ENCODE measurements at regions of chr4 and their contacts with region 1.

Region 1: DNA sequence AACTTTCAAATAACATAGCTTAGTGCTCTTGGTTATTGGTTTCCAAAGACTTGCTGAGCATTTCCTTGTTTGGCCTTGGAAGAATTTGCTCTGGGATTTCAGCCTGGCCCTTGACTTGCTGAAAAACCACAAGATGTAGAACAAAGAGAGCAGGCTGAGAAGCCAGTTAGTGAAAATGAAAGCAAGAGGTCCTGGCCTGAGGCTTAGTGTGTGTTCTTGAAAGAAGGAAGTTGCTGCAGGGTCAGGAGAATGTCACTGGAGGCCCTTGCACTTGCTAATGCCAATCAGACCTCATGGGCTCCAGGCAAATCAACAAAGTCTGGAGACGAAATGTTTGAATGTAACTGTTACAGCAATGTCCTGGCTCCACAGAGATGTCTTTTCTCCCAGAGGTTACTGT is 79.4 kb downstream of the SYNPO2 start:
- DNase-seq: peak in 1 of 2 donors; percentile 81
- H3K4me3 ChIP-seq: peak overlapping the region in 1 of 2 donors; percentile 24
- H3K27ac ChIP-seq: peak overlapping the region; percentile 76 to 84
- H3K4me1 ChIP-seq: peaks cover 17 to 61% of the 10 kb centered on the region in 2 donors
- H3K27me3 ChIP-seq: no peaks in the 10 kb centered on the region
- CTCF ChIP-seq: no peak

Region 2: DNA sequence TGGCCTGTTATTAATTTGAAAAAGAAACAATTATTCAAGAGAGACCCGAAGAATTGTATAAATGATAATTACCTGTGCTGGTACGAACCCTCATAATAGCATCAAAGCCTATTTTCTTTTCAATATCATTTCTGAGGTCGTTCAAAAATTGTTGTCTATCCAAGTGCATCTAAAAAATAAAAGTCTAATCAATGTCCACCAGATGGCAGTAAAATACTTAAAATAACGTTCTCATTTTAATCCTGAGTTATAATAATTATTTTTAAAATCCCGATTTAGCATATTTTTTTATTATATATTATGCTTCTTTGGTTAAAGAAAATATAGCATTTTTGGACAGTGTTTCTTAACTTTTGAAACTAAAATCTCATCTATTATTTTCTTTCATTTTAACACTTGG is 227.1 kb before region 1 on chr4:
- intact Hi-C with region 1: loop called (anchors 1 kb)
- DNase-seq: no peak
- H3K4me3 ChIP-seq: peak overlapping the region in 1 of 2 donors; percentile 36
- H3K27ac ChIP-seq: peak overlapping the region; percentile 29 to 50
- H3K4me1 ChIP-seq: peaks cover 0 to 9% of the 10 kb centered on the region in 2 donors
- H3K27me3 ChIP-seq: no peaks in the 10 kb centered on the region
- CTCF ChIP-seq: peak; percentile 45 to 54 (median 50)

Region 3: DNA sequence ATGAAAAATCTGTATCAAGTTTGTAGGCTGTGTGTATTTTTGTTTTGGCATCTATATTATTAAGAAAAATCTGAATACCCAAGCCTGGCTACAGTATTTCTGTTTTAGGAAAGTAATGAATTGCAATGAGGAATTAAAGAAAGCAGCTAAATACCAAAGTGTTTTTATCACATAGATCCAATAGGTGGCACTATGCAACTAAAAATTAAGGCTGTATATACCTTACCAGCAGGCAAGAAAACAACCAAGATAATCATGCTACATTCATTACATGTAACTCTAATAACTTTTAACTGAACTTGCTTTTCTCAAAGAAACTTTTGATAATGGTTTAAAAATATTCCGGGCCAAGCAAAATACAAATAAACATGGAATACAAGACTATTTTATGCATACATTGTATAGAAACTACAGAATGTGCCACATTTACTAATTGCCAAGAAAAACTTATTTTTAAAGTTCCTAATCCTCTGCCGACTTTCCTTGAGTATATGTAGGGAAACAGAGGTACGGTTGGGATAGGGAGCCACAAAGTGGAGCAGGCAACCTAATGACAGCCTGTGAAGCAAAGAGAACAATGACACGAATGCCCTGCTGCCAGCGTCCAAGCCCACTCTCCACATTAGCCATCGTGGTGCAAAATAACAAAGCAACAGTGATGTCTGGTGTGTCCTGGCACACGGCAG is 195.8 kb before region 1 on chr4:
- intact Hi-C with region 1: loop called (anchors 1 kb)
- DNase-seq: no peak
- H3K4me3 ChIP-seq: peak overlapping the region; percentile 27
- H3K27ac ChIP-seq: peak overlapping the region; percentile 62 to 76
- H3K4me1 ChIP-seq: peaks cover 7 to 46% of the 10 kb centered on the region in 2 donors
- H3K27me3 ChIP-seq: no peaks in the 10 kb centered on the region
- CTCF ChIP-seq: peak; percentile 46 to 62 (median 61)

Region 4: GRCh38 chr4:118835571-118836300 is 132.3 kb before region 1 on chr4 and contains the start of gene SEC24D:
- intact Hi-C with region 1: loop called (anchors 2 kb)
- DNase-seq: peak in 1 of 2 donors; percentile 94
- H3K4me3 ChIP-seq: peak within 1 kb of the TSS; percentile 97 to 98
- H3K27ac ChIP-seq: peak within 1 kb of the TSS; percentile 99
- H3K4me1 ChIP-seq: peaks cover 0 to 27% of the 10 kb centered on the region in 2 donors
- H3K27me3 ChIP-seq: no peaks in the 10 kb centered on the region
- CTCF ChIP-seq: peak in 1 of 3 experiments; percentile 18
- total RNA-seq, gene SEC24D: 108 TPM

Region 5: GRCh38 chr4:119833611-119834010 is 865.6 kb after region 1 on chr4:
- intact Hi-C with region 1: no loop called
- DNase-seq: peak in 1 of 2 donors; percentile 66
- H3K4me3 ChIP-seq: no peak overlapping the region
- H3K27ac ChIP-seq: peak overlapping the region; percentile 79 to 80
- H3K4me1 ChIP-seq: peaks cover 0 to 23% of the 10 kb centered on the region in 2 donors
- H3K27me3 ChIP-seq: no peaks in the 10 kb centered on the region
- CTCF ChIP-seq: no peak